Dorsolateral prefrontal cortex (tissue), 120 donors: ENCODE measurements at regions of chr6 and their contacts with region 1.

Region 1: GRCh38 chr6:119323931-119324330 is 25.6 kb downstream of the MAN1A1 start:
- DNase-seq: no peak
- H3K4me3 ChIP-seq: no peak overlapping the region
- H3K27ac ChIP-seq: peak overlapping the region in 1 of 59 donors; percentile 28
- H3K27me3 ChIP-seq: no peaks in the 10 kb centered on the region
- CTCF ChIP-seq: no peak

Region 2: DNA sequence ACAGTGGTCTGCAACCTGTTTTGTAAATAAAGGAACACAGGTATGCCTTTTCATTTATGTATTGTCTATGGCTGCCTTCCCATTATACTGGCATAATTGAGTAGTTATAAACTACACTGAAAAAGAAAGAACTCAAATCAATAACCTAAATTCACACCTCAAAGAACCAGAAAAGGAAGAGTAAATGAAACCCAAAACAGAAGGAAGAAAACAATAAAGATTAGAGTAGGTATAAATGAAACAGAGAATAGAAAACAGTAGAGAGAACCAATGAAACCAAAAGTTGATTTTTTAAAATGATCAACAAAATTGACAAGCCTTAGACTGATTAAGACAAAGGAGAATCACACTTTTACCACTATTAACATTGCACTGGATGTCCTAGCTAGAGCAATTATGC is 280.1 kb before region 1 on chr6:
- intact Hi-C with region 1: no loop called
- DNase-seq: no peak
- H3K4me3 ChIP-seq: no peak overlapping the region
- H3K27ac ChIP-seq: no peak overlapping the region
- H3K27me3 ChIP-seq: no peaks in the 10 kb centered on the region
- CTCF ChIP-seq: no peak

Region 3: DNA sequence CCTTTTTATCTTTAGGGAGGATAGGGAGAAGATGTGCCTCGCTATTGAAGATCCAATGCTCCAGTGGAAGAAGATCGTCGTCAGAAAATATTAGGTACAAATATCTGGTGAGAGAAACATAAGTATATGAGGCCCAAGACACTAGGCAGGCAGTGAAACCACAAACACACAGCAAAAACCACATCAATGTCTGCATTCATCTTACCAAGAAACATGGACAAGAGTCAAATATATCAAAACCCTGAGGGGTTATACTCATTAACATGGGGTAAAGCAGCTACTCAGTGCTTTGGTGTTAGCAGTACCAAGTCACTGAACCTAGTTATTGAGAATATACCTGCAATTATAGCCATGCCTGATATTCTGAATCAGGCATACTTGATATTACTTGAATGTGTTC is 144.1 kb before region 1 on chr6:
- intact Hi-C with region 1: no loop called
- DNase-seq: no peak
- H3K4me3 ChIP-seq: no peak overlapping the region
- H3K27ac ChIP-seq: no peak overlapping the region
- H3K27me3 ChIP-seq: no peaks in the 10 kb centered on the region
- CTCF ChIP-seq: no peak

Region 4: GRCh38 chr6:119196715-119197114 is 127.2 kb before region 1 on chr6:
- intact Hi-C with region 1: no loop called
- DNase-seq: no peak
- H3K4me3 ChIP-seq: no peak overlapping the region
- H3K27ac ChIP-seq: no peak overlapping the region
- H3K27me3 ChIP-seq: no peaks in the 10 kb centered on the region
- CTCF ChIP-seq: no peak

Region 5: DNA sequence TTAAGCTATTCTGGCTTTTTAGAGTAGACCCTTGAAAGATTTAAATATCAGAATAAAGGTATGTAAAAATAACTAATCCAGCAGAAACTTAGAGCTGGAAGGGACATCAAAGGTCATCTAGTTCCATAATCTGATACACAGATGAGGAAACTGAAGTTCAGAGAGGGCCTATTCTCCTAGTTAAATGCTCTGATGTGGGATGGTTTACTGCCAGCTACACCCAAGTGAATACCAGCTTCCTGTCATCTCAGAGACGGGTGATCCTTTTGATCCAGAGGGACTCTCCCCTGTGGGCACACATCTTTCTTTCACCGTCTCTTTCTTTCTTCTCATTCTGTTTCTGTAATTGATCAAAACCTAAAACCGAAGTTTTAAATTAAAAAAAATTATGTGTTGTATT is 68.4 kb before region 1 on chr6:
- intact Hi-C with region 1: no loop called
- DNase-seq: no peak
- H3K4me3 ChIP-seq: no peak overlapping the region
- H3K27ac ChIP-seq: no peak overlapping the region
- H3K27me3 ChIP-seq: no peaks in the 10 kb centered on the region
- CTCF ChIP-seq: no peak

Region 6: GRCh38 chr6:119368951-119369350 is 45.0 kb after region 1 on chr6:
- intact Hi-C with region 1: loop called in 1 of 2 experiments (anchors 2 kb)
- DNase-seq: no peak
- H3K4me3 ChIP-seq: no peak overlapping the region
- H3K27ac ChIP-seq: no peak overlapping the region
- H3K27me3 ChIP-seq: no peaks in the 10 kb centered on the region
- CTCF ChIP-seq: no peak